Naive thymus-derived CD4-positive, alpha-beta T cell (primary cell): ENCODE measurements at regions of chr17 and their contacts with region 1.

Region 1: GRCh38 chr17:7045909-7046724 is 2.2 kb upstream of the SLC16A11 start:
- DNase-seq: peak in 8 of 9 donors; percentile 48 to 79 (median 69)
- ATAC-seq: peak; percentile 58
- H3K4me3 ChIP-seq: peak overlapping the region; percentile 66
- H3K4me3 Mint-ChIP-seq: peak overlapping the region; percentile 78 to 91 (median 86)
- H3K27ac ChIP-seq: peak overlapping the region; percentile 74
- H3K27ac Mint-ChIP-seq: peak overlapping the region; percentile 69 to 96 (median 92)
- H3K4me1 ChIP-seq: peaks cover 27 to 30% of the 10 kb centered on the region in 2 donors
- H3K4me1 Mint-ChIP-seq: peaks cover 0 to 53% (median 36%) of the 10 kb centered on the region in 7 donors
- H3K27me3 ChIP-seq: no peaks in the 10 kb centered on the region
- H3K27me3 Mint-ChIP-seq: peaks cover 0 to 36% (median 0%) of the 10 kb centered on the region in 5 donors

Region 2: DNA sequence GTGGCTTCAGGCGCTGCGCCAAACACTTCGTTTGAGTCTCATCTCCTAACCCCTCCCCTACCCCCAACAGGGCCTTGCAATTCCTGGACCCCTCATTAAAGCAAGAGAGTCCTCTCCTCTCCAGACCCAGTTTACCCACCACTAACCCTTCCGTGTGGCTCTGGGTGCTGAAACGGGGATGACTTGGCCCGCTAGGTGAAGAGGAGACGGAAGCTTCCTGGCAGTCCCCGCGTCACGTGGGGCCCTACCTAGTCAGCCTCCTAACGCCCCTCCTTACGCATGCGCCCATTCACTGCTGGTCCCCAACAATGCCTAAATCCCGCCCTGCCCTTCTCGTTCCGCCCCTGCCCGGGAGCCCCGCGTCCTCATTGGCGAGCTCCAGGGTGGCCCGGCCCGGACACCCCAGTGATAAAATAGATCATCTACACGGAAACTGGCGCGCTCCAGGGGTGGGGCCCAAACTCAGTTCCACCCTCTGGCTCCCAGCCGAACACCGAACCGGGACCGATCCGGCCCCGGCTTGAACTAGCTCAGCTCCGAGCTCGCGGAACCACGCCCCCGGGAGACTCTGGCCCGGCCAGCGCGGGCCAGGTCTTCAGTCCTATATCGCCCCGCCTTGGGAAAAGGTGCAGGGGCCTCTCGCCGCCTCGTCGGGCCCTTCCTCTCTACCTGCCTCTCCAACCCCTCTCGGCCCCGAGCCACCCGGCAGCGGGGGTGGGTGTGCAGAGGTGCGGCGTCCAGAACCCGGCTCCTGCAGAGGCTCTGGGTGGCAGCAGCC is 10.3 kb before region 1 on chr17 and contains the start of gene SLC16A13:
- CTCF ChIA-PET with region 1: interaction called, 33 read pairs
- POLR2A ChIA-PET with region 1: interaction called, 28 read pairs
- intact Hi-C with region 1: loop called (anchors 1 kb)
- DNase-seq: peak; percentile 87 to 99 (median 97)
- ATAC-seq: peak; percentile 95
- H3K4me3 ChIP-seq: peak within 1 kb of the TSS; percentile 67
- H3K4me3 Mint-ChIP-seq: peak within 1 kb of the TSS; percentile 89 to 95 (median 93)
- H3K27ac ChIP-seq: peak within 1 kb of the TSS; percentile 94
- H3K27ac Mint-ChIP-seq: peak within 1 kb of the TSS; percentile 96 to 99 (median 98)
- H3K4me1 ChIP-seq: peaks cover 26 to 36% of the 10 kb centered on the region in 2 donors
- H3K4me1 Mint-ChIP-seq: peaks cover 39 to 80% (median 58%) of the 10 kb centered on the region in 7 donors
- H3K27me3 ChIP-seq: no peaks in the 10 kb centered on the region
- H3K27me3 Mint-ChIP-seq: no peaks in the 10 kb centered on the region
- total RNA-seq, gene SLC16A13: 3.4 to 20.9 (median 15.0) TPM

Region 3: DNA sequence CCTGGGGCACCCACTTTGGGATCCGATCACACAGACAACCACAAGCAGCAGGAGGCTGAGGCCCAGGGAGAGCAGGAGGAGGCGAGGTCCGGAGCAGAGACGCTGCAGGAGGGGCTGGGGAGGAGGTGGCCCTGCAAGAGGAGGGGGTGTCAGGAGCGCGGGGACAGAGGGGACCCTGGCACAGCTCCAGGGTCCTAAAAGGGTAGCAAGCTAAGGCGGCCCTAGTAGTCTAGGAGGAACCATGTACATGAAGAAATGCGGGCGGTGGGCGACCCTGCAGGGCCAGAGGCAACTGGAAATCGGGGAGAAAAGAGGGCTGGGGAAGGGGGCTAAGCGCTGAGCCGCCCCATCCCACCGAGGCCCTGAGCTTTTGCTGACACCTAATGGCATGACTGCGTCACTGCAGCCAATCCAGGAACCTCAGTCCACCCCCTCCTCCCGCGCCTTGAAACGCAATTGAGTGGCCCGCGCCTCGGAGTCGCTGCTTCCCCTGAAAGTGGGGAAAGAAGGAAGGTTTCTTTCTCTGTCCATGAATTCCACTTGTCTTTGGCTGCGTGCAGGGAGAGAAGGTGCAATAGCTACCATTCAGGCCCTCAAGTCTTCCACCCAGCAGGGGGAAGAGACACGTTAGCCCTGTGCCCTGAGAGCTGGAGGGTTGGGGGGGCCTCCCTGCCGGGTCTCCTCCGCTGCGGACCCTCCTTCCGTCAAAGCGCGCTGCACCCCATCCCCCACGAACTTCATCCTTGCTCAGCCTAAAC is 131.3 kb after region 1 on chr17:
- CTCF ChIA-PET with region 1: interaction called, 16 read pairs
- POLR2A ChIA-PET with region 1: interaction called, 5 read pairs
- intact Hi-C with region 1: loop called (anchors 1 kb)
- DNase-seq: peak; percentile 48 to 76 (median 62)
- ATAC-seq: peak; percentile 88
- H3K4me3 ChIP-seq: peak overlapping the region; percentile 50
- H3K4me3 Mint-ChIP-seq: peak overlapping the region in 8 of 10 donors; percentile 68 to 83 (median 81)
- H3K27ac ChIP-seq: no peak overlapping the region
- H3K27ac Mint-ChIP-seq: peak overlapping the region in 5 of 9 donors; percentile 18 to 66 (median 51)
- H3K4me1 ChIP-seq: peaks cover 12 to 23% of the 10 kb centered on the region in 2 donors
- H3K4me1 Mint-ChIP-seq: peaks cover 4 to 13% (median 9%) of the 10 kb centered on the region in 7 donors
- H3K27me3 ChIP-seq: no peaks in the 10 kb centered on the region
- H3K27me3 Mint-ChIP-seq: peaks cover 0 to 17% (median 8%) of the 10 kb centered on the region in 5 donors

Region 4: GRCh38 chr17:7280519-7281429 is 234.7 kb after region 1 on chr17:
- CTCF ChIA-PET with region 1: no interaction called
- POLR2A ChIA-PET with region 1: no interaction called
- intact Hi-C with region 1: loop called in 1 of 2 experiments (anchors 1 kb)
- DNase-seq: peak; percentile 76 to 88 (median 85)
- ATAC-seq: peak; percentile 95
- H3K4me3 ChIP-seq: peak overlapping the region; percentile 66
- H3K4me3 Mint-ChIP-seq: peak overlapping the region; percentile 77 to 87 (median 84)
- H3K27ac ChIP-seq: no peak overlapping the region
- H3K27ac Mint-ChIP-seq: peak overlapping the region in 7 of 9 donors; percentile 6 to 88 (median 51)
- H3K4me1 ChIP-seq: peaks cover 11 to 23% of the 10 kb centered on the region in 2 donors
- H3K4me1 Mint-ChIP-seq: peaks cover 14 to 31% (median 21%) of the 10 kb centered on the region in 7 donors
- H3K27me3 ChIP-seq: no peaks in the 10 kb centered on the region
- H3K27me3 Mint-ChIP-seq: peaks cover 6 to 44% (median 17%) of the 10 kb centered on the region in 5 donors

Region 5: DNA sequence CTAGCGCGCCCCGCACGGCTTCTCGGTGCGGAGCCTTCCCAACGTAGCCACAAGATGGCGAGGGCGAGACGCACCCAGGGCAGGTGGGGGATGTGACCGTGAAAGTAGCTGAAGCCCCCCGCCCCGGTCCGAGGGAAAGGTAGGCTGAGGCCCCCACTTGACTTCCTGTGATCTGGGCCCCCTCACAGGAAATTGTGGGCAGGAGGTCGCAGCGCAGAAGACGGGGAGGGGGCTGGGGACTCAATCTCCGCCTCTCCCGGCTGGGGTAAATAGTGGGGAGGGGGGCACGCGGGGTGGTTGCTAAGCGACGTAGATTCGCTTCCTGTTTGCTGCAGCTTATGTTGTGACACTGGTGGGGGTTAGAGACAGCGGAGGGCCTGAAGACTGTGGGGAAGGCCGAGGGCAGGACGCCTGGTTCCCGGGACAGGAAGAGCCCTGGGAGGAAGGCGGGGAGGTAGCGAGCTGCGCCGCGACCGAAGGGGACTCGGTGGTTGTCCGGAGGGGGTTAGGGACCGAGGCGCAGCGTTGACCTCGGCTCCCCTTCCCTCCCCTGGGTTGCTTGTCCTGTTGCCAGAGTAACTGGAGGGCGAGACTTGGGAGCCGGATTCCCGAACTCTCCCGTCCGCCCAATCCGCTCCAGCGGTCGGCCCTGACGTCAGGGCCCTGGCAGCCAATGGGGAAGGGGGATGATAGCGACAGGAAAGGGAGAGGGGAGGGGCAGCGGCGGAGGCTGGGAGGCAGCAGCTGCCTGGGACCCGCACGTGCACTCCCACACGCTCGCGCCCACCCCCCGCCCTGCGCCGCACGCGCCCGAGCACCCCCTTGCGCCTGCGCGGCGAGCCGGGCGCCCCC is 789.1 kb after region 1 on chr17:
- CTCF ChIA-PET with region 1: no interaction called
- POLR2A ChIA-PET with region 1: no interaction called
- intact Hi-C with region 1: loop called in 1 of 2 experiments (anchors 10 kb)
- DNase-seq: peak; percentile 76 to 97 (median 95)
- ATAC-seq: peak; percentile 70
- H3K4me3 ChIP-seq: peak overlapping the region; percentile 96
- H3K4me3 Mint-ChIP-seq: peak overlapping the region; percentile 91 to 99 (median 96)
- H3K27ac ChIP-seq: peak overlapping the region; percentile 96
- H3K27ac Mint-ChIP-seq: peak overlapping the region; percentile 95 to 100 (median 99)
- H3K4me1 ChIP-seq: peaks cover 29 to 38% of the 10 kb centered on the region in 2 donors
- H3K4me1 Mint-ChIP-seq: peaks cover 28 to 60% (median 44%) of the 10 kb centered on the region in 7 donors
- H3K27me3 ChIP-seq: no peaks in the 10 kb centered on the region
- H3K27me3 Mint-ChIP-seq: peaks cover 0 to 28% (median 0%) of the 10 kb centered on the region in 5 donors